AG04450 (cell line): ENCODE measurements at regions of chr3 and their contacts with region 1.

Region 1: DNA sequence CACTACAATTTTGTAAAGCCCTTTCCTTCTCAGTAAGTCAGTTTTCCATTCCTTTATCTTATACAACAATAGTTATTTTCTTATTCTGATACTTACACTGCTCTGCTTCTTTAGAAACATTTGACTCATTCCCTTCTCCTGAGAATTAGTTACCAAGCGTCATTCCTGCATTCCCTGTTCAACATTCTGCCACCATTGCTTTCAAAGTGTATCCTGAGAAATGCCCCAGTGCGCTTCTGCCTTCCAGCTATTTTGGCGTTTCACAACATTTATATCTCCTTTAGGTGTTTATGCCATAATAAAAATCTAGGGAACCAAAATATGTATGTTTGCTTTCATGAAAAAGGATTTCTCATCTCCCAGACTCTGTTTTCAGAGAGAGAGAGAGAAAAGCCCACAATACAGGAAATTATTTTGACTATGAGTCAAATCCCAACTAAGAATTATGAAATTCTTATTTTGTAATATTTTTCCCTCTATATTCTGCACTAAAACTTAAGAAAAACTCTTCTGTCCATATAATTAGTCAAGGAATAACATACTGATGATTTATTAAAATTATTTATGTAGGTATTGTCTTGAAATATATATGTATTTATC is 118.2 kb upstream of the RAP2B start:
- DNase-seq: no peak
- H3K4me3 ChIP-seq: no peak overlapping the region
- H3K27ac ChIP-seq: no peak overlapping the region
- H3K27me3 ChIP-seq: no peaks in the 10 kb centered on the region
- CTCF ChIP-seq: no peak

Region 2: DNA sequence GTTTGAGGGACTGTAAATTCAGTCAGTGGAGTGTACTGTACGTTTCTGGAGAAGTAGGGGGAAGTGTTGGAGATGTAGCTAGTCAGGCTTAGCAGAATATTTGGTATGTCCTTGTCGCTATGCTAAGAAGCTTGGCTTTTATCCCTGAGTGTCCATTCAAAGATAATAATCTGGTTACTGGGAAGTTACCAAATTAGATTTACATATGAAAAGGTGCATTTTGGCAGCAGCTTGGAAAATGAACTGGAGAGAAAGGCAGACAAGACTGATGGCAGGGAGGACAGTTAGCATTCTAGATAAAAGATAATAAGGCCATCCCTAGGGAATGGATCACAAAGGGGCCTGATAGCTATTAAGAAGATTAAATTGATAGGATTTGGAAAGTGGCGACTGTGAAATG is 150.2 kb before region 1 on chr3:
- CTCF ChIA-PET with region 1: no interaction called
- POLR2A ChIA-PET with region 1: no interaction called
- DNase-seq: no peak
- H3K4me3 ChIP-seq: no peak overlapping the region
- H3K27ac ChIP-seq: no peak overlapping the region
- H3K27me3 ChIP-seq: no peaks in the 10 kb centered on the region
- CTCF ChIP-seq: no peak

Region 3: GRCh38 chr3:153026026-153026425 is 17.8 kb before region 1 on chr3:
- CTCF ChIA-PET with region 1: interaction called, 12 read pairs
- POLR2A ChIA-PET with region 1: no interaction called
- DNase-seq: no peak
- H3K4me3 ChIP-seq: no peak overlapping the region
- H3K27ac ChIP-seq: no peak overlapping the region
- H3K27me3 ChIP-seq: no peaks in the 10 kb centered on the region
- CTCF ChIP-seq: peak; percentile 64

Region 4: GRCh38 chr3:153032891-153033290 is 10.9 kb before region 1 on chr3:
- CTCF ChIA-PET with region 1: interaction called, 13 read pairs
- POLR2A ChIA-PET with region 1: no interaction called
- DNase-seq: no peak
- H3K4me3 ChIP-seq: no peak overlapping the region
- H3K27ac ChIP-seq: no peak overlapping the region
- H3K27me3 ChIP-seq: no peaks in the 10 kb centered on the region
- CTCF ChIP-seq: no peak

Region 5: GRCh38 chr3:153055217-153055616 is 11.4 kb after region 1 on chr3:
- CTCF ChIA-PET with region 1: interaction called, 12 read pairs
- POLR2A ChIA-PET with region 1: no interaction called
- DNase-seq: no peak
- H3K4me3 ChIP-seq: no peak overlapping the region
- H3K27ac ChIP-seq: no peak overlapping the region
- H3K27me3 ChIP-seq: no peaks in the 10 kb centered on the region
- CTCF ChIP-seq: no peak

Region 6: DNA sequence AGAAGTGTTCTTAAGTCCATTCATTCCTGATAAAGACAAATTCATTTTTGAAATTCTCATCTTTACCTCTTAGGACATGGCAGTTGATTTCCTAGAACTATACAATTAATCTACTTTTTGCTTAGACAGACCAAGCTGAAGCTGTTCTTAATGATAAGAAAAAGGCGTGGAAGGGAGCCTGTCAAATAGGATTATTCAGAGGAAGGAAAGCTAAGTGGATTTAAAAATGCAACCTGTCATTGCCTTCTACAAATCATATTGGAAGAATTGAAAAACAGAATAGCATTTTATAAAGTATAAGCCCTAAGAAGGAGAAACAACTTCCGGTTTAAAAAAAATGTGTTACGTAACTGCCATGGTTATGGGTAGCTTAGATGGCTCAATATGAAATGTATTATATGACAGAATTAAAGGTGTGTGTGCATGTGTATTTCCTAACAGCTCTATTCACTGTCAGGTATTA is 37.0 kb after region 1 on chr3:
- CTCF ChIA-PET with region 1: no interaction called
- POLR2A ChIA-PET with region 1: no interaction called
- DNase-seq: no peak
- H3K4me3 ChIP-seq: no peak overlapping the region
- H3K27ac ChIP-seq: no peak overlapping the region
- H3K27me3 ChIP-seq: no peaks in the 10 kb centered on the region
- CTCF ChIP-seq: no peak

Region 7: GRCh38 chr3:153161138-153161713 is 117.4 kb after region 1 on chr3:
- CTCF ChIA-PET with region 1: interaction called, 22 read pairs
- POLR2A ChIA-PET with region 1: interaction called, 36 read pairs
- DNase-seq: peak; percentile 100
- H3K4me3 ChIP-seq: peak overlapping the region; percentile 96
- H3K27ac ChIP-seq: peak overlapping the region; percentile 98
- H3K27me3 ChIP-seq: no peaks in the 10 kb centered on the region
- CTCF ChIP-seq: no peak

Region 8: DNA sequence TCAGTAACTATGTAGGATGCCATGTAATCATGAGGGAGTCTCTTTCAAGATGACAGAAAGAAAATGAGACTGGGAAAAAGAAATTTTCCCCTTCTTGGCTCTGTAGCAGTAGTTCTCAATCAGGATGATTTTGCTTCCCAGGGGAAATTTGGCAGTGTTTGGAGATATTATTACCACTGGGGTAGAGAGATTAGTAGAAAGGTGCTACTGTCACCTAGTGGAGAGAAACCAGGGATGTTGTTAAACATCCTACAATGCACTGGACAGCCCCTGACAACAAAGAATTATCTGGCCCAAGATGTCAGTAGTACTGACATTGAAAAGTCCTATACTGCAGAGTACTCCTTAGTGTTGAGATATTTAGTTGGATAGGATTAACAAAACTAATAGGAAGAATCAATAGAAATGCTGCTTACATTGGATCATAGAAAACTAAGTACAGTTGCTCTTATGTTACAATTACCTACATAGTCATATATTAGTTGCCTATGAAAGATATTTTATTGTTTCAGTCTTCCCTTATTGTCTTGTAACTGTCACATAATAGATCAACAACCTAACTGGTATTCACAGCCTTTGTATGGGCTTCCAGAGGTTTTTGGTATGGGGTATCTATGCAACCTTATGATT is 551.5 kb after region 1 on chr3:
- CTCF ChIA-PET with region 1: interaction called, 10 read pairs
- POLR2A ChIA-PET with region 1: no interaction called
- DNase-seq: peak; percentile 11
- H3K4me3 ChIP-seq: no peak overlapping the region
- H3K27ac ChIP-seq: no peak overlapping the region
- H3K27me3 ChIP-seq: peaks cover 5% of the 10 kb centered on the region
- CTCF ChIP-seq: peak; percentile 83